ENCODE measurements at regions of chr1 and their contacts with region 1.

Region 1: DNA sequence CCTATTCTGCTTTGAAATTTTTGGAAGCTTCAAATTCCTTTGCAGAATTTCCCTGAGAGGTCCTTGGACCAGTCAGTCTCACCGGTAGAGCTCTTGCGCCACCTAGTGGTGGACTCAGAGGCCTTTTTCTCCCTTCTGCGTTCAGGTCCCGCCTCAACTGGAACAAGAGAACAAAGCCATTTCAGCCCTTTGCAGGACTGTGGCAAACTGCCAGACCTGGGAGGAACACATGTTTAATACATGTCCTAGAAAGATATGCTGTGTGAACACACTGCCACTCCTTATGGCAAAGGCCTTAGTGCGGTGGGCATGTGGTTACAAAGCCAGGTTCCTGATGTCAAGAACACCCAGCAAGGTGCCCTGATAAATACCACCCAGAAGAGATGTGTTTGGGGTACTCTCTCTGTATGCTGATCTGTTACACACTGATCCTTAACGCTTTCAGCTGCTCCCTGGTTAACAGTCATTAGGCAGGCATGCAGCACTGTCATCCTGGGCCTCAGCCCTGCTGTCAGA is 82.2 kb upstream of the SSX2IP start:
- DNase-seq: peak; percentile 50 to 86 (median 65)
- ATAC-seq: peak; percentile 73
- H3K4me3 ChIP-seq: no peak overlapping the region
- H3K4me3 Mint-ChIP-seq: no peak overlapping the region
- H3K27ac ChIP-seq: no peak overlapping the region
- H3K27ac Mint-ChIP-seq: no peak overlapping the region
- H3K4me1 ChIP-seq: peaks cover 5% of the 10 kb centered on the region
- H3K4me1 Mint-ChIP-seq: no peaks in the 10 kb centered on the region
- H3K27me3 ChIP-seq: no peaks in the 10 kb centered on the region
- H3K27me3 Mint-ChIP-seq: peaks cover 14% of the 10 kb centered on the region
- CTCF ChIP-seq: peak; percentile 99

Region 2: DNA sequence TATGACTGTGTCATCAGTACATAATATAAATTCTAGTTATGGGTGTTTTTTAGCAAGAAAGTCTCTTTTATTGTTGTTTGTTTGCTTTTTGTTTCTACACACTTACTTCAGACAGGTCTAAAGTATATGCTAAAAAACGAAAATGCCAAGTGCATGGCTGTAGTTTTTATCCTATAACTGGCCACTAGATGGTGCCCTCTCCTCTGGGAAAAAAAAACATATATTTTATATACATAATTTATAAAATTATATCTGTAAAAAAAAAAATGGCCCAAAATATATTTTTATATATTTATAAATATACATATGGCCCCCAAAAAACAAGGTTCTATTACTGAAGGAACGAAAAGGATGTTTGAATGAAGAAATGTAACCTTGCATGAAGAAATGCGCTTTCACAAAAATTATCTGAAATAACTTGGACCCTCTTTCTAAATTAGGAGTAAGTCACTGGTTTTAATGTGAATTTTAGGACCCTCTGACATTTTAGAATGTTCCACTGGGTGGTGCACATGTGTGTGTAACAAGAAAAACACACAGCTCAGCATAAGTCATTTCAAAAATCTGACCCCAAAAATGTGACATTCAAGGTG is 867.1 kb before region 1 on chr1:
- CTCF ChIA-PET with region 1: no interaction called
- POLR2A ChIA-PET with region 1: no interaction called
- intact Hi-C with region 1: loop called (anchors 1 to 5 kb)
- DNase-seq: peak in 4 of 14 experiments; percentile 15 to 53 (median 46)
- ATAC-seq: peak; percentile 54
- H3K4me3 ChIP-seq: no peak overlapping the region
- H3K4me3 Mint-ChIP-seq: no peak overlapping the region
- H3K27ac ChIP-seq: no peak overlapping the region
- H3K27ac Mint-ChIP-seq: no peak overlapping the region
- H3K4me1 ChIP-seq: no peaks in the 10 kb centered on the region
- H3K4me1 Mint-ChIP-seq: no peaks in the 10 kb centered on the region
- H3K27me3 ChIP-seq: no peaks in the 10 kb centered on the region
- H3K27me3 Mint-ChIP-seq: peaks cover 18% of the 10 kb centered on the region
- CTCF ChIP-seq: peak; percentile 89

Region 3: GRCh38 chr1:83931658-83932253 is 840.7 kb before region 1 on chr1:
- CTCF ChIA-PET with region 1: interaction called, 3 read pairs
- POLR2A ChIA-PET with region 1: no interaction called
- intact Hi-C with region 1: loop called (anchors 5 kb)
- DNase-seq: peak in 5 of 14 experiments; percentile 1 to 64 (median 64)
- ATAC-seq: peak; percentile 76
- H3K4me3 ChIP-seq: no peak overlapping the region
- H3K4me3 Mint-ChIP-seq: no peak overlapping the region
- H3K27ac ChIP-seq: no peak overlapping the region
- H3K27ac Mint-ChIP-seq: no peak overlapping the region
- H3K4me1 ChIP-seq: no peaks in the 10 kb centered on the region
- H3K4me1 Mint-ChIP-seq: no peaks in the 10 kb centered on the region
- H3K27me3 ChIP-seq: no peaks in the 10 kb centered on the region
- H3K27me3 Mint-ChIP-seq: peaks cover 4% of the 10 kb centered on the region
- CTCF ChIP-seq: peak; percentile 73

Region 4: GRCh38 chr1:84135341-84135740 is 637.1 kb before region 1 on chr1:
- CTCF ChIA-PET with region 1: no interaction called
- POLR2A ChIA-PET with region 1: no interaction called
- intact Hi-C with region 1: loop called (anchors 2 to 5 kb)
- DNase-seq: no peak
- ATAC-seq: no peak
- H3K4me3 ChIP-seq: no peak overlapping the region
- H3K4me3 Mint-ChIP-seq: no peak overlapping the region
- H3K27ac ChIP-seq: no peak overlapping the region
- H3K27ac Mint-ChIP-seq: no peak overlapping the region
- H3K4me1 ChIP-seq: no peaks in the 10 kb centered on the region
- H3K4me1 Mint-ChIP-seq: peaks cover 13% of the 10 kb centered on the region
- H3K27me3 ChIP-seq: no peaks in the 10 kb centered on the region
- H3K27me3 Mint-ChIP-seq: no peaks in the 10 kb centered on the region
- CTCF ChIP-seq: no peak

Region 5: GRCh38 chr1:84442256-84442655 is 330.2 kb before region 1 on chr1:
- CTCF ChIA-PET with region 1: interaction called, 6 read pairs
- POLR2A ChIA-PET with region 1: no interaction called
- intact Hi-C with region 1: loop called (anchors 5 kb)
- DNase-seq: peak in 4 of 14 experiments; percentile 7 to 89 (median 86)
- ATAC-seq: peak; percentile 98
- H3K4me3 ChIP-seq: no peak overlapping the region
- H3K4me3 Mint-ChIP-seq: peak overlapping the region; percentile 5
- H3K27ac ChIP-seq: no peak overlapping the region
- H3K27ac Mint-ChIP-seq: peak overlapping the region; percentile 1
- H3K4me1 ChIP-seq: peaks cover 17% of the 10 kb centered on the region
- H3K4me1 Mint-ChIP-seq: peaks cover 11% of the 10 kb centered on the region
- H3K27me3 ChIP-seq: no peaks in the 10 kb centered on the region
- H3K27me3 Mint-ChIP-seq: peaks cover 15% of the 10 kb centered on the region
- CTCF ChIP-seq: peak; percentile 69

Region 6: GRCh38 chr1:84620720-84621313 is 151.7 kb before region 1 on chr1:
- CTCF ChIA-PET with region 1: no interaction called
- POLR2A ChIA-PET with region 1: no interaction called
- intact Hi-C with region 1: loop called in 1 of 2 experiments (anchors 5 kb)
- DNase-seq: peak; percentile 50 to 88 (median 74)
- ATAC-seq: peak; percentile 92
- H3K4me3 ChIP-seq: peak overlapping the region; percentile 64
- H3K4me3 Mint-ChIP-seq: peak overlapping the region; percentile 95
- H3K27ac ChIP-seq: no peak overlapping the region
- H3K27ac Mint-ChIP-seq: no peak overlapping the region
- H3K4me1 ChIP-seq: peaks cover 8% of the 10 kb centered on the region
- H3K4me1 Mint-ChIP-seq: peaks cover 12% of the 10 kb centered on the region
- H3K27me3 ChIP-seq: no peaks in the 10 kb centered on the region
- H3K27me3 Mint-ChIP-seq: no peaks in the 10 kb centered on the region
- CTCF ChIP-seq: peak; percentile 100